CD8-positive, alpha-beta T cell (primary cell): ENCODE measurements at regions of chr4 and their contacts with region 1.

Region 1: GRCh38 chr4:87422104-87423052 is at the start of gene NUDT9:
- DNase-seq: peak; percentile 76 to 94 (median 86)
- ATAC-seq: peak; percentile 82
- H3K4me3 ChIP-seq: peak within 1 kb of the TSS; percentile 76 to 94
- H3K4me3 Mint-ChIP-seq: peak within 1 kb of the TSS; percentile 98
- H3K27ac ChIP-seq: peak within 1 kb of the TSS; percentile 86 to 92
- H3K27ac Mint-ChIP-seq: peak within 1 kb of the TSS; percentile 99
- H3K4me1 ChIP-seq: peaks cover 18% of the 10 kb centered on the region
- H3K4me1 Mint-ChIP-seq: peaks cover 39% of the 10 kb centered on the region
- H3K27me3 ChIP-seq: no peaks in the 10 kb centered on the region
- H3K27me3 Mint-ChIP-seq: no peaks in the 10 kb centered on the region
- CTCF ChIP-seq: no peak
- total RNA-seq, gene NUDT9: 4.9 to 6.4 TPM

Region 2: DNA sequence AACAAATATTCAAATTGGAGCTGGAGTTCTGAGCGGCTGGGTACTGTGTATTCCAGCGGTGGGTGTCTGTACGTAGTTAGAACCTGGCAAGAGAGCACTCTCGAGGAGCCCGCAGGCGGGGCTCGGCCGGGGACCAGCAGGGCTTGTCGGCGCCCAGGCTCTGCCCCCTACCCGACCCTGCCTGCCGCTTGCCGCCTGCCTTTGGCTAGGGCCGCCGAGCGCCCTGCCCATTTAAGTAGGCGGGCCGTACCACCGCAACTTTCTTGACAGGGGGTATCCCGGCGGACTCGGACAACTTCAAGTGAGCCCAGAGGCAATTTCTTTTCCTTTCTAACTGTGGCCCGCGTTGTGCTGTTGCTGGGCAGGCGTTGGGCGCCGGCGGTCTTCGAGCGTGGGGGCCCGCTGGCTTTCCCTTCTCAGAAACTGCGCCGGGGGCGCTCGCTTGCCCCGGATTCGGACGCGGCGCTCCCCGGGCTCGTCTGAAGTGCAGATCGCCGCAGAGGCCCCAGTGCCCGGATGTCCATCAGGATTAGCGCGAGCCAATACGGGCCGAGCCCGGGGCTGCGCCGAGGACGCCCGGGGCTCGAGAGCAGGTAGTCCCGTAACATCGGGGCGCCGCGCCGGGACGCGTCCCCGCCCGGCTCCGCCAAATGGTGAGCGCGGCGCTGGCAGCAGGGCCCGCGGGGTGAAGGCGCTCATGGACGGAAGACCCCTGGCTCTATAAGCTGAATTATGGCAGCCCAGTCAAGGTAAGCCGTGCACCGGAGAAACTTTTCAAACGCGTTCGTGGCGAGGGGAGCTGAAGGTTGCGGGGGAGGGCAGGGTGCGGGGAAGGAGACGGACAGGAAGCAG is 415.5 kb before region 1 on chr4:
- CTCF ChIA-PET with region 1: no interaction called
- POLR2A ChIA-PET with region 1: no interaction called
- intact Hi-C with region 1: loop called (anchors 5 to 10 kb)
- DNase-seq: peak; percentile 83 to 95 (median 89)
- ATAC-seq: peak; percentile 81
- H3K4me3 ChIP-seq: peak overlapping the region; percentile 75 to 91
- H3K4me3 Mint-ChIP-seq: peak overlapping the region; percentile 91
- H3K27ac ChIP-seq: peak overlapping the region; percentile 83 to 95
- H3K27ac Mint-ChIP-seq: peak overlapping the region; percentile 96
- H3K4me1 ChIP-seq: peaks cover 43% of the 10 kb centered on the region
- H3K4me1 Mint-ChIP-seq: peaks cover 53% of the 10 kb centered on the region
- H3K27me3 ChIP-seq: no peaks in the 10 kb centered on the region
- H3K27me3 Mint-ChIP-seq: no peaks in the 10 kb centered on the region
- CTCF ChIP-seq: no peak

Region 3: DNA sequence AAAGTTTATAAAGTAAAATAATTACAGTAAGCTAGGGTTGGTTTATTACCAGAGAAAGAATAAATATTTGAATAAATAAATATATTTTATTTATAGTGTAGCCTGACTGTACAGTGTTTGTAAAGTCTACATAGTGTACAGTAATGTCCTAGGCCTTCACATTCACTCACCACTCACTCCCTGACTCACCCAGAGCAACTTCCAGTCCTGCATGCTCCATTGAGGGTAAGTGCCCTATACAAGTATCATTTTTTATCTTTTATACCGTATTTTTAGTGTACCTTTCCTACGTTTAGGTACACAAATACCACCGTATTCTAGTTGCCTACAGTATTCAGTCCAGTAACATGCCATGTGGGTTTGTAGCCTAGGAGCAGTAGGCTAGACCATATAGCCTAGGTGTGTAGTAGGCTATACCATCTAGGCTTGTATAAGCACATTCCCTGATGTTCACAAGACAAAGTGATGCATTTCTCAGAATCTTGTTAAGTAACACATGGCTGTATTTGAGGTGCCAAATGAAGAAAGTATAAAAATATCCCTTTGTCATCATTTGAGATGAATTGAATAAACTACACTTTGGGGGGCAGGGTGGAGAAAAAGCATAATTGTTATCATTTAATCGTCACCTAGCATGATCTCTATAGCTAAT is 187.2 kb before region 1 on chr4:
- CTCF ChIA-PET with region 1: interaction called, 4 read pairs
- POLR2A ChIA-PET with region 1: no interaction called
- intact Hi-C with region 1: loop called in 1 of 2 experiments (anchors 5 kb)
- DNase-seq: peak in 1 of 9 experiments; percentile 5
- ATAC-seq: no peak
- H3K4me3 ChIP-seq: peak overlapping the region; percentile 52 to 61
- H3K4me3 Mint-ChIP-seq: peak overlapping the region; percentile 79
- H3K27ac ChIP-seq: no peak overlapping the region
- H3K27ac Mint-ChIP-seq: no peak overlapping the region
- H3K4me1 ChIP-seq: peaks cover 4% of the 10 kb centered on the region
- H3K4me1 Mint-ChIP-seq: peaks cover 2% of the 10 kb centered on the region
- H3K27me3 ChIP-seq: no peaks in the 10 kb centered on the region
- H3K27me3 Mint-ChIP-seq: no peaks in the 10 kb centered on the region
- CTCF ChIP-seq: no peak

Region 4: GRCh38 chr4:87390891-87391575 is 31.3 kb before region 1 on chr4 and contains the start of gene HSD17B11:
- CTCF ChIA-PET with region 1: interaction called, 26 read pairs
- POLR2A ChIA-PET with region 1: interaction called, 46 read pairs
- intact Hi-C with region 1: loop called (anchors 1 kb)
- DNase-seq: peak; percentile 65 to 93 (median 84)
- ATAC-seq: peak; percentile 98
- H3K4me3 ChIP-seq: peak within 1 kb of the TSS; percentile 52 to 83
- H3K4me3 Mint-ChIP-seq: peak within 1 kb of the TSS; percentile 98
- H3K27ac ChIP-seq: peak within 1 kb of the TSS; percentile 57 to 84
- H3K27ac Mint-ChIP-seq: peak within 1 kb of the TSS; percentile 91
- H3K4me1 ChIP-seq: peaks cover 29% of the 10 kb centered on the region
- H3K4me1 Mint-ChIP-seq: peaks cover 55% of the 10 kb centered on the region
- H3K27me3 ChIP-seq: no peaks in the 10 kb centered on the region
- H3K27me3 Mint-ChIP-seq: no peaks in the 10 kb centered on the region
- CTCF ChIP-seq: no peak
- total RNA-seq, gene HSD17B11: 38.8 to 42.4 TPM

Region 5: DNA sequence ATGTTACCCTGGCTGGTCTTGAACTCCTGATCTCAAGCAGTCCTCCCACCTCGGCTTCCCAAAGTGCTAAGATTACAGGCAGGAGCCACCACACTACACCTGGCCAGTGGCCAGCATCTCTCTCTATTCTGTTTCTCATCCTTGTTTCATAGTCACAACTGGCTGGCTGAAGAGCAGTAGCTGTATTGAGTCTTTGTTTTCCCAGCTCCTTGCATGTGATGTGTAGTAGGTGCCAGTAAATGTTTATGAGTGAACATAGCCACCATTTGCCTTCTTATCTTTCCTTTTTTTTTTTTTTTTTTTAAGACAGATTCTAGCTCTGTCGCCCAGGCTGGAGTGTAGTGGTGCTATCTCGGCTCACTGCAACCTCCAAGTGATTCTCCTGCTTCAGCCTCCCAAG is 23.6 kb after region 1 on chr4:
- CTCF ChIA-PET with region 1: no interaction called
- POLR2A ChIA-PET with region 1: interaction called, 3 read pairs
- intact Hi-C with region 1: loop called in 1 of 2 experiments (anchors 2 kb)
- DNase-seq: no peak
- ATAC-seq: no peak
- H3K4me3 ChIP-seq: no peak overlapping the region
- H3K4me3 Mint-ChIP-seq: no peak overlapping the region
- H3K27ac ChIP-seq: no peak overlapping the region
- H3K27ac Mint-ChIP-seq: peak overlapping the region; percentile 34
- H3K4me1 ChIP-seq: no peaks in the 10 kb centered on the region
- H3K4me1 Mint-ChIP-seq: no peaks in the 10 kb centered on the region
- H3K27me3 ChIP-seq: no peaks in the 10 kb centered on the region
- H3K27me3 Mint-ChIP-seq: no peaks in the 10 kb centered on the region
- CTCF ChIP-seq: no peak

Region 6: DNA sequence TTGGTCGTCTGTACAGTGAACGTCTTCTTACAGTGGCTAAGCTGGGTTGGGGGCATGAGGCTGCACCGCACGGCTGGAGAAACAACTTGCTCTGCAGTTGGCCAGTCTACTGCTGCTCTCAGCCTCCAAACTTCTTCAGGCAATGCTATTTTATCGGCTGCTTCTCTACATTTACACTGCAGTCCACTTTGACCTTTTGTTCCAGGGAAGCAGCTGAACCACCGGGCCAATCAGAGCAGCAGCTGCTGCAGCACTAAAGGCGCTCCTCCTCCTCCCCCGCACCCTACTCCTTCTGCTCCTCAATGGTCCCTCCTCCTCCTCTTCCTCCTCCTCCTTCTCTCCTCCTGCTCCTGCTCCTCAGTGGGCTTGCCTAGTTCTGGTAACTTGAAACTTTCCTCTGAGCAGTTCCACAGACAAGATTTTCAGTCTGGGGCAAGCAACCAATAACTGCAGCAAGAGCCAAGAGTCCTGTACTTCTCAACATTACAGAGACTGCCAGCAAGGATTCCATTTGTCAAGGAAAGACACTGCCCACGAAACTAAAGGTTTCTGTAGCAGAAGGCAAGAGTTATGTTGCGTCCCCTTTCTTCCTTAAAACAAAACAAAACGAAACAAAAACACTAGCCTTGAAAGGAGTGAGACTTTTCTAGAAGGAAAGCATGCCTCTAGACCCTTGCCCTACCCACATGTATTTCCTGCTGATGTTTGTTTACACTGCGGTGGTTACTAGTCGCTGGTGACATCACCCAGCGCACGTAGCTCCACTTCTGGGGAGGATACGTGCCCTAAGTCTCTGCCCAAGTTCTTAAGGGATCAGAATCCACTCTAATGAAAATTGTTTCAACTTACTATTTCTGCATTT is 1400.9 kb after region 1 on chr4:
- CTCF ChIA-PET with region 1: no interaction called
- POLR2A ChIA-PET with region 1: no interaction called
- intact Hi-C with region 1: loop called in 1 of 2 experiments (anchors 10 kb)
- DNase-seq: peak; percentile 36 to 94 (median 61)
- ATAC-seq: peak; percentile 95
- H3K4me3 ChIP-seq: peak overlapping the region; percentile 42 to 51
- H3K4me3 Mint-ChIP-seq: peak overlapping the region; percentile 93
- H3K27ac ChIP-seq: peak overlapping the region; percentile 52 to 83
- H3K27ac Mint-ChIP-seq: peak overlapping the region; percentile 94
- H3K4me1 ChIP-seq: peaks cover 5% of the 10 kb centered on the region
- H3K4me1 Mint-ChIP-seq: peaks cover 29% of the 10 kb centered on the region
- H3K27me3 ChIP-seq: peaks cover 0 to 2% of the 10 kb centered on the region in 2 experiments
- H3K27me3 Mint-ChIP-seq: no peaks in the 10 kb centered on the region
- CTCF ChIP-seq: no peak